ENCODE measurements at regions of chr15 and their contacts with region 1.

Region 1: DNA sequence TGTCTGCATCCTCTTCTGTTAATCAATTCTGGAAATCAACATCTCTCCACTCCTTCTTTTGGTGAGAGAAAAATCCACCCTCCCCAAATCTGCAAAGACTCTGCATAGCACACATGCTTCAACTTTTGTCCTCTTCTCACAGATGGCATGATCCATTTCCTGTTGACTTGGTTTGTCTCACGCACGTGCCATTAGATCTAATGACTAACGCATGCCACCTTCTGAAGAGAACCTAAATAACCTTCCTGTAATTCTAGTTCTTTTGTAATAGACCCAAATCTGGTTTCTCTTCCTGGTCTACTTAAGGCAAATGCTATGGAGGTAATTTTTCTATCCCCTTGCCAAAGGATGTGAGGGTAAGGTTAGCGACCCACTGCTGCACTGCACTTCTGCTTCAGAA is 51.0 kb upstream of the ATOSA start:
- DNase-seq: no peak
- ATAC-seq: no peak
- H3K4me3 ChIP-seq: no peak overlapping the region
- H3K27ac ChIP-seq: no peak overlapping the region
- H3K4me1 ChIP-seq: peaks cover 37% of the 10 kb centered on the region
- H3K27me3 ChIP-seq: no peaks in the 10 kb centered on the region; a peak in 1 of 5 replicates
- CTCF ChIP-seq: no peak
- EP300 ChIP-seq: no peak
- POLR2A ChIP-seq: no peak
- RAD21 ChIP-seq: no peak

Region 2: DNA sequence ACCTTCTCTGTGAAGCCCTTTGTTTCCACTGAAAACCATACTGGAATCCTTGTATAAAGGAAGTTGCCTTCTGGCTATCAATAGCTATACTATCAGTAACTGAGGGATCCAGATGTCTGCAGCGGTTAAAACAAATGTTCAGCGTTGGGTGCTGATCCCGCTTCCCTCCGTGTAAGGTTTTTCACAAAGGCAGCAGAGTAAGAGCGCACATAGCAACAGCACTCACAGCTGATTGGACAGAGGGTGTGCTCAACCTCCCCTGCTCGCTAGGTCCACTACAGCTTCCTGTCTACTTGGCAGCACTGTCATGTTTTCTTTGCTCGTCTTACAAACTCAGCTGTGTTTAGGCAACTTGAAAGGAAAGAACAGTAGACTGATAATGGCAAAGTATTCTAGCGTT is 78.3 kb before region 1 on chr15:
- CTCF ChIA-PET with region 1: no interaction called
- POLR2A ChIA-PET with region 1: interaction called, 4 read pairs
- in situ Hi-C with region 1: no loop called
- intact Hi-C with region 1: loop called (anchors 5 kb)
- DNase-seq: peak; percentile 80
- ATAC-seq: peak; percentile 100
- H3K4me3 ChIP-seq: peak overlapping the region in 2 of 3 experiments; percentile 51 to 56; a peak in 3 of 6 replicates
- H3K27ac ChIP-seq: peak overlapping the region; percentile 56
- H3K4me1 ChIP-seq: peaks cover 17% of the 10 kb centered on the region
- H3K27me3 ChIP-seq: no peaks in the 10 kb centered on the region
- CTCF ChIP-seq: no peak
- EP300 ChIP-seq: peak in 1 of 2 experiments; percentile 61; a peak in 2 of 4 replicates
- POLR2A ChIP-seq: no peak
- RAD21 ChIP-seq: no peak

Region 3: GRCh38 chr15:52749258-52749657 is 19.1 kb after region 1 on chr15:
- CTCF ChIA-PET with region 1: no interaction called
- POLR2A ChIA-PET with region 1: no interaction called
- in situ Hi-C with region 1: no loop called
- intact Hi-C with region 1: no loop called
- DNase-seq: no peak
- ATAC-seq: no peak
- H3K4me3 ChIP-seq: no peak overlapping the region
- H3K27ac ChIP-seq: no peak overlapping the region
- H3K4me1 ChIP-seq: peaks cover 15% of the 10 kb centered on the region
- H3K27me3 ChIP-seq: no peaks in the 10 kb centered on the region
- CTCF ChIP-seq: no peak
- EP300 ChIP-seq: no peak
- POLR2A ChIP-seq: no peak
- RAD21 ChIP-seq: no peak

Region 4: GRCh38 chr15:53246404-53246803 is 516.2 kb after region 1 on chr15:
- CTCF ChIA-PET with region 1: no interaction called
- POLR2A ChIA-PET with region 1: no interaction called
- in situ Hi-C with region 1: no loop called
- intact Hi-C with region 1: no loop called
- DNase-seq: no peak
- ATAC-seq: no peak
- H3K4me3 ChIP-seq: no peak overlapping the region
- H3K27ac ChIP-seq: no peak overlapping the region
- H3K4me1 ChIP-seq: no peaks in the 10 kb centered on the region
- H3K27me3 ChIP-seq: no peaks in the 10 kb centered on the region; a peak in 2 of 5 replicates
- CTCF ChIP-seq: no peak
- EP300 ChIP-seq: no peak
- POLR2A ChIP-seq: no peak
- RAD21 ChIP-seq: no peak

Measured in HepG2 (cell line).